ENCODE measurements at regions of chrX and their contacts with region 1.

Region 1: DNA sequence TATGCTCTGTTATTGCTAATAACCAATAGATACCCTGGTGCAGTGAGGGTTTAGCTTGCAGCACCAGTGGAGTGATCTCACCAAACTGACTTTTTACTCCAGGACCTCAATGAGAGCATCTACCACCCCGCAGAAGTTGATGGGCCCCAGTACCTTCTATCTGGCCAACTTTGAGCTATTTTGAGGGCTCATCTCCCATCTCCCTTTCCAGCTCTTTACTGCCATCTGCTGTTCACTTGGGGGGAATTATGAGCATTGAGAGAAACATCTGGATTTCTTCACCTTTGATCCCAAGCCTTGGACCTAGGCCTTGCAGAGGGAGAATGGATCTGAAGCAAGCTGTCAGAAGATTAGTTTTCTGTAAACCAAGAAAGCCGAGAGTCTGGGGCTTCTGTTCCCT is 143.6 kb downstream of the TMEM164 start:
- DNase-seq: peak in 4 of 9 experiments; percentile 16 to 56 (median 37)
- ATAC-seq: peak; percentile 38
- H3K4me3 ChIP-seq: no peak overlapping the region
- H3K4me3 Mint-ChIP-seq: no peak overlapping the region
- H3K27ac ChIP-seq: no peak overlapping the region
- H3K27ac Mint-ChIP-seq: no peak overlapping the region
- H3K4me1 ChIP-seq: no peaks in the 10 kb centered on the region
- H3K4me1 Mint-ChIP-seq: peaks cover 2% of the 10 kb centered on the region
- H3K27me3 ChIP-seq: no peaks in the 10 kb centered on the region
- H3K27me3 Mint-ChIP-seq: no peaks in the 10 kb centered on the region
- CTCF ChIP-seq: no peak

Region 2: GRCh38 chrX:109374262-109374960 is 772.1 kb before region 1 on chrX:
- CTCF ChIA-PET with region 1: no interaction called
- POLR2A ChIA-PET with region 1: no interaction called
- intact Hi-C with region 1: no loop called
- DNase-seq: no peak
- ATAC-seq: no peak
- H3K4me3 ChIP-seq: no peak overlapping the region
- H3K4me3 Mint-ChIP-seq: no peak overlapping the region
- H3K27ac ChIP-seq: no peak overlapping the region
- H3K27ac Mint-ChIP-seq: no peak overlapping the region
- H3K4me1 ChIP-seq: no peaks in the 10 kb centered on the region
- H3K4me1 Mint-ChIP-seq: no peaks in the 10 kb centered on the region
- H3K27me3 ChIP-seq: no peaks in the 10 kb centered on the region
- H3K27me3 Mint-ChIP-seq: no peaks in the 10 kb centered on the region
- CTCF ChIP-seq: no peak

Region 3: GRCh38 chrX:109709129-109709631 is 437.3 kb before region 1 on chrX:
- CTCF ChIA-PET with region 1: no interaction called
- POLR2A ChIA-PET with region 1: no interaction called
- intact Hi-C with region 1: loop called (anchors 1 to 10 kb)
- DNase-seq: peak in 2 of 9 experiments; percentile 3 to 32
- ATAC-seq: peak; percentile 20
- H3K4me3 ChIP-seq: no peak overlapping the region
- H3K4me3 Mint-ChIP-seq: peak overlapping the region; percentile 58
- H3K27ac ChIP-seq: peak overlapping the region in 1 of 2 experiments; percentile 45
- H3K27ac Mint-ChIP-seq: peak overlapping the region; percentile 67
- H3K4me1 ChIP-seq: peaks cover 19% of the 10 kb centered on the region
- H3K4me1 Mint-ChIP-seq: peaks cover 63% of the 10 kb centered on the region
- H3K27me3 ChIP-seq: no peaks in the 10 kb centered on the region
- H3K27me3 Mint-ChIP-seq: no peaks in the 10 kb centered on the region
- CTCF ChIP-seq: no peak

Region 4: DNA sequence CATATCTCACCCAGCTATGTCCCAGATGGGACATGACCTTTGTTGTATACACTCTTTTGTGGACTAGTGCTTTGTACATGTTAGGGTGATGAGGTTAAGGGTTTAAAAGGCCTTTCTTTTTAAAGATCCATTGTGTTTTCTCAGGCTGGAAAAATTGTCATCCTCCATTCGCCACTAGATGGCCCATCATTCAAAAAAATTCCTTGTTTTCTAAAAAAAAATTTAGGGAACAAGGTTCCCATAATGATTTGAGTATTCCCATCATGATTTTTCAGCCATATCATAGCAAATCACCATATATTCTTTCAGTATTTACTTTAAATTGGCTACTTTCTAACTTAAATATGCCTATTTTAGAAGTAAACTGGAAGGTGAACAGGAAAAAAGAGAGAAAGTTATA is 235.5 kb before region 1 on chrX:
- CTCF ChIA-PET with region 1: interaction called, 6 read pairs
- POLR2A ChIA-PET with region 1: no interaction called
- intact Hi-C with region 1: loop called in 1 of 2 experiments (anchors 2 kb)
- DNase-seq: no peak
- ATAC-seq: no peak
- H3K4me3 ChIP-seq: no peak overlapping the region
- H3K4me3 Mint-ChIP-seq: no peak overlapping the region
- H3K27ac ChIP-seq: no peak overlapping the region
- H3K27ac Mint-ChIP-seq: no peak overlapping the region
- H3K4me1 ChIP-seq: no peaks in the 10 kb centered on the region
- H3K4me1 Mint-ChIP-seq: no peaks in the 10 kb centered on the region
- H3K27me3 ChIP-seq: no peaks in the 10 kb centered on the region
- H3K27me3 Mint-ChIP-seq: no peaks in the 10 kb centered on the region
- CTCF ChIP-seq: no peak

Region 5: GRCh38 chrX:110086916-110087484 is 59.5 kb before region 1 on chrX:
- CTCF ChIA-PET with region 1: no interaction called
- POLR2A ChIA-PET with region 1: no interaction called
- intact Hi-C with region 1: no loop called
- DNase-seq: no peak
- ATAC-seq: no peak
- H3K4me3 ChIP-seq: no peak overlapping the region
- H3K4me3 Mint-ChIP-seq: no peak overlapping the region
- H3K27ac ChIP-seq: no peak overlapping the region
- H3K27ac Mint-ChIP-seq: no peak overlapping the region
- H3K4me1 ChIP-seq: no peaks in the 10 kb centered on the region
- H3K4me1 Mint-ChIP-seq: peaks cover 32% of the 10 kb centered on the region
- H3K27me3 ChIP-seq: no peaks in the 10 kb centered on the region
- H3K27me3 Mint-ChIP-seq: no peaks in the 10 kb centered on the region
- CTCF ChIP-seq: no peak

Region 6: DNA sequence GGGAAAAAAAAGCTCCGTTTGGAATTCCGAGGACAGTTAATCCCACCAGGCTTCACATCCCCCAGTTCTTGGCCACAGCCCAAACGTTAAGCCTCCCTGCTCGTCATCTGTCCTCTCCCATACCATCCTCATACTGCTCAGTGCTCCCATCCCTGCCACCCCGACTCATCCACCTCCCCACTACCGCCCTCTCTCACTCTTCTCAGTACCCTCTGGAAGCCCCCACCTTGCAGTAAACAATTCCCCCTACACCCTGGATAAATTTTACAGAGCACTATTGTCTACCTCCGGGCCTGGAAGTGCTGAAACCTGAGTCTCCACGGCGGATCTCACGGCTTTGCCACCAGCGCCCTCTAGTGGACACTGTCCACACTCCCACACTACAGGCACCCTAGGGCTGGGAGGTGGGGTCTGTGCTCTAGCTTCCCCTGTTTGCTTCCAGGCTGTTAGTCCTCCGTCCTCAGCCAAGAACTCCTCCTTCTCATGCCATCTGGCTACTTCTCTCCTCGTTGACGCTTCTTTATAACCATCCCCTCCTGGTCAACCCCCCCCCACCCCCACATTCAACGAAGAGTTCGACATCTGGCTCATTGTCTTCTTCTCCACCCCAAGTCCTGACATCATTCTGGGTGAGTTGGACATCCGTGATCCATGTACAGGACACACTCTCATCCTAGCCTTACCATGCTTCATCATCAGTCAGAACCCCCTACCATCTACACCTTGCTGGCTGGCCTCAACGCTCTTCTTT is 266.6 kb after region 1 on chrX:
- CTCF ChIA-PET with region 1: interaction called, 457 read pairs
- POLR2A ChIA-PET with region 1: no interaction called
- intact Hi-C with region 1: no loop called
- DNase-seq: peak; percentile 37 to 77 (median 62)
- ATAC-seq: peak; percentile 80
- H3K4me3 ChIP-seq: no peak overlapping the region
- H3K4me3 Mint-ChIP-seq: no peak overlapping the region
- H3K27ac ChIP-seq: no peak overlapping the region
- H3K27ac Mint-ChIP-seq: no peak overlapping the region
- H3K4me1 ChIP-seq: no peaks in the 10 kb centered on the region
- H3K4me1 Mint-ChIP-seq: no peaks in the 10 kb centered on the region
- H3K27me3 ChIP-seq: no peaks in the 10 kb centered on the region
- H3K27me3 Mint-ChIP-seq: no peaks in the 10 kb centered on the region
- CTCF ChIP-seq: peak; percentile 57

Measured in CD8-positive, alpha-beta T cell (primary cell).